Vagina (tissue), 2 donors: ENCODE measurements at regions of chr19 and their contacts with region 1.

Region 1: DNA sequence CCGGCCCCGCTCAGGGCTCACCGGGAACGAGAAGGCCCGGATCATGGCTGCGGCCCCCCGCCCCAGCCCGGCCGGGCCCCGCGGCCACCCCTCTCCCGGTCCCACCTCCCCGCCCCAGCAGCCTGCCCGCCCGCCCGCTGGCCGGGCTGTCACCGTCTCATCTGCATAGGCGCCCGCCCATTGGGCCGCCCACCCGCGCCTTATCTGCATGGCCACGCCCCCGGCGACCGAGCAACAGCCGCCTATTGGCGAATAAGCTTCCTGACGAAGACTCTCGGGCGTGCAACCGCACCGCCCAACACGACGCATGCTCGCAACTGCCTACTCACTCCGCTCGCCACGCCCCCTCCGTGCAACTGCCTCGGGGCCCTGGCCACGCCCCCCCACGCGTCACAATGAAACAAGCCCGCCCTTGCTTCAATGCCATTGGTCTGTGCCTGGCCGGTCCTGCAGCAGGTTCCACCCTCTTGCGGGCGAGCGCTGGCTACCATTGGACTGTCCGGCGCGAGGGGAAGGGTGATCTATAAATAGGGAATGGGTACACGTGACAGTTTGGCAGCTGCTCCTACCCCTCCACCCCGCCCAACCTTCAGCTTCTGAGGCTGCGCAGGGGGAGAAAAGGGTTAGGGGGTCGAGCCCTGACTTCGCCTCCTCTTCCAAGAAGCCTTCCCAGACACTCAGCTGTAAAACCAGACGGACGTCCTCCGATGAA is at the start of gene DACT3:
- DNase-seq: peak; percentile 100
- H3K4me3 ChIP-seq: peak within 1 kb of the TSS; percentile 56 to 74
- H3K27ac ChIP-seq: peak within 1 kb of the TSS; percentile 94
- H3K4me1 ChIP-seq: peaks cover 38% of the 10 kb centered on the region
- H3K27me3 ChIP-seq: no peaks in the 10 kb centered on the region
- CTCF ChIP-seq: peak in 2 of 3 experiments; percentile 9 to 27
- POLR2A ChIP-seq: peak in 1 of 2 donors; percentile 50
- total RNA-seq, gene DACT3: 13.8 TPM

Region 2: DNA sequence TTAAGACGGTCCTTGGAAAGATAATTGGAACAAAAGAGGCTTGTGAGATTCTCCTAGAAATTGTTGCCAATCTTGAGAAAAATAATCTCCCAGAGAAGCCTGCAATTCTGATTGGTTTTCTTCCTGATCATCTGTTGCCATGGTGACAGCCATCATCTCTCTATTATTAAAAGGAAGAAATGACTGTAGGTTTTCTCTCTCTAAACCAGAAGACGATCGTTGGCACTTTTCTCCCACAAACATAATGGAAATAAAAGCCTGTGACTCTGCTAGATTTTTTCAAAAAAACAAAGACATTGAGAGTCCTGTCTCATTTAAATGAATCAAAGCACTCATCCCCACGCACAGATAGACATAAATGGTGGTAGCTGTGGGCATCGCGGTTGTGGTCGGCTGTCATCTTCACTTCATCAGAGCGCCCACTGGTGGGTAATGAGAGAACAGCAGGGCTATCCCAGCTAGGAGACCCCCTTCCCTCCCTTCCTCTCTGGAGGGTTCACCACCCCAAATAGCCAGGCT is 81.8 kb before region 1 on chr19:
- intact Hi-C with region 1: no loop called
- DNase-seq: no peak
- H3K4me3 ChIP-seq: no peak overlapping the region
- H3K27ac ChIP-seq: no peak overlapping the region
- H3K4me1 ChIP-seq: no peaks in the 10 kb centered on the region
- H3K27me3 ChIP-seq: no peaks in the 10 kb centered on the region
- CTCF ChIP-seq: no peak
- POLR2A ChIP-seq: no peak

Region 3: DNA sequence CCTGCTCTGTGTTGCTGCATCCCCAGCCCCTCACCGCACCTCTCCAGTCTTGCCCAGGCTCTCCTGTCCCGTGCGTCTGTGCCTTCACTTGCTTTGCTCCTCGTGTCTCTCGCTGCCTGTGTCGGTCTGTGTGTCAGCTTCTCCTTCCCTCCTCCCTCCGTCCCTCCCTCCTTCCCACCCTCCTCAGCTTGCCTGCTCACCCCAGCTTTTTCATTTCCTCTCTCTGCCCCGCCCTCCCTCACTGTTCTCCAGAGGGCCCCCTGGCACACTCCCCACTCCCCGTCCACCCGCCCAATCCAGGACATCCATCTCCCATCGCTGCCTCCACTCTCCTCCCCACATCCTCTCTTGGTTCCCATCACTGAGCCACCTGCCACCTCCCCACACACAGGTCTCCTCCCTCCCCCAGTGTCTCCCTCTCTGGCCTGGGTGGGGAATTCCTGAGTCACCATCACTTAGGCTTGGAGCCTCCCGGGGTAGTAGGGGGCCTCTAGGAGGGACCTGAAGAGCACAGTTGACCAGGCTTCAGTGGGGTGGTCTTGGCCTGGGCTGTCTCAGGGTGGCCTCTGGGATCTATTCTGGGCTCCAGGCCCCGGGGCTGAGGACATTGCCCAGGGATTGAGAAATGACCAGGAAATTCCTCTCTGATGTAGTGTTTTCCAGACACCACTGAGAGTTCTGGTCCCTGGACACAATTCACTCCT is 36.1 kb before region 1 on chr19 and contains the start of gene PTGIR:
- intact Hi-C with region 1: loop called (anchors 5 kb)
- DNase-seq: no peak
- H3K4me3 ChIP-seq: peak within 1 kb of the TSS; percentile 17 to 27
- H3K27ac ChIP-seq: peak within 1 kb of the TSS; percentile 87
- H3K4me1 ChIP-seq: peaks cover 36% of the 10 kb centered on the region
- H3K27me3 ChIP-seq: no peaks in the 10 kb centered on the region
- CTCF ChIP-seq: no peak
- POLR2A ChIP-seq: no peak
- total RNA-seq, gene PTGIR: 10.8 TPM